SK-N-SH (cell line): ENCODE measurements at regions of chrX and their contacts with region 1.

Region 1: DNA sequence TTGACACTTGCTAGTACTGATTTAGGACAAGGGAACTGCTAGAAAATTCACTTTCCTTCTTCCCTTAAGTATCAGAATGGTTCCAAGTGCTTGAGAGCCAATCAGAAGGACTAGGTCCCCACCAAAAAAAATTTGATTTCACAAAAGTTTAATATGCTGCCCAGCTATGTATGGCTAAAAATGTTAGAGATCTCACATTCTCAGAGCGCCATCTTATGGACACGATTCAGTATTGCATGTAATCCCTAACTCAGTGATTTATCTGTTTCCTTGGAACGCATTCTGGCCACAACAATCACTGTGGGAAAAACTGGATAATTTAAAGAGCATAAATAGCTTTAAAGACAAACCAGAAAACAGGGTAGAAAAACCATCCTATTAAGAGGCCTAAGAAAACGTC is 255.1 kb upstream of the GPC4 start:
- DNase-seq: peak; percentile 48
- H3K4me3 ChIP-seq: no peak overlapping the region; a peak in 1 of 4 replicates
- H3K27ac ChIP-seq: no peak overlapping the region
- H3K4me1 ChIP-seq: peaks cover 0 to 4% of the 10 kb centered on the region in 2 experiments; a peak in 1 of 4 replicates
- H3K27me3 ChIP-seq: peaks cover 23% of the 10 kb centered on the region; the same call in 1 of the 2 replicates
- CTCF ChIP-seq: peak; percentile 88
- EP300 ChIP-seq: no peak
- RAD21 ChIP-seq: peak; percentile 88

Region 2: DNA sequence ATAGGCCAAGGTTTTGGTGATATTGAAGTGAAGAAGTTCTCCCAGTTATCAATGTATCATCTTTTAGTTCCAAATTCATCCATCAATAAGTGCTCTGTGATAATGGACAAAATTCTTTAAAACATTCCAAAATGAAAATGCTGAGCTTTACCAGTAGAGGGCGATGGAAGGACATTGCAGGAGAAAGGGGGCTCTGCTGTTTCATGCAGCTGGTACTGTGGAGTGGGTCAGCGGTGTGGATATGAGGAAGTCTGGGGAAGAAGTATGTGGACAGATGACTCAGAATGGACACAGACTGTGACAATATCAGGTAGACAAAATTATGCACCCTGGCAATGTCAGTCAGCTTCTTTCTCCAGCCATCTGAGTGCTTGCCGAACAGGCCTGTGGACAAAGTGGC is 665.3 kb before region 1 on chrX:
- CTCF ChIA-PET with region 1: interaction called, 10 read pairs
- POLR2A ChIA-PET with region 1: no interaction called
- DNase-seq: peak; percentile 39
- H3K4me3 ChIP-seq: no peak overlapping the region; a peak in 1 of 4 replicates
- H3K27ac ChIP-seq: no peak overlapping the region; a peak in 1 of 4 replicates
- H3K4me1 ChIP-seq: peaks cover 0 to 2% of the 10 kb centered on the region in 2 experiments; a peak in 1 of 4 replicates
- H3K27me3 ChIP-seq: no peaks in the 10 kb centered on the region; the same call in 1 of the 2 replicates
- CTCF ChIP-seq: peak; percentile 67
- EP300 ChIP-seq: no peak
- RAD21 ChIP-seq: peak; percentile 71

Region 3: DNA sequence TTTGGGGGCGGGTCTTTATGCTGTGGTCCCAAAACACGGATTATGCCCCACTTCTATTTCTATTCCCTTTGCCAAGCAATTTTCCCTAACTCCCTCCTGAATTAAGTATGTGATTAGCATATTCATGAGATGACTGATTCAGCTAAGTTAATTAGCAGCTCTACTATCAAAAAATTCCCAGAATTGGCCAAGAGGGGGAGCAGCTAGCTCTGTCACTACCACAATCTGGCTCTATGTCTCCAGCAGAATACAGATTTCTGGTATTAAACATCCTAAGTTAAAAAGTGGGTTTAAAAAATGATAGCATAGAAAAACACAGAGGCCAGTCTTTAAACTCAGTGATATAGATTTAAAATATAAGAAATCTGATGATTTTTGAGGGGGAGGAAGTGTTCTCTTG is 335.4 kb before region 1 on chrX:
- CTCF ChIA-PET with region 1: interaction called, 32 read pairs
- POLR2A ChIA-PET with region 1: no interaction called
- DNase-seq: peak; percentile 32
- H3K4me3 ChIP-seq: no peak overlapping the region
- H3K27ac ChIP-seq: no peak overlapping the region
- H3K4me1 ChIP-seq: no peaks in the 10 kb centered on the region
- H3K27me3 ChIP-seq: no peaks in the 10 kb centered on the region; the same call in 1 of the 2 replicates
- CTCF ChIP-seq: peak; percentile 69
- EP300 ChIP-seq: no peak
- RAD21 ChIP-seq: peak; percentile 65

Region 4: DNA sequence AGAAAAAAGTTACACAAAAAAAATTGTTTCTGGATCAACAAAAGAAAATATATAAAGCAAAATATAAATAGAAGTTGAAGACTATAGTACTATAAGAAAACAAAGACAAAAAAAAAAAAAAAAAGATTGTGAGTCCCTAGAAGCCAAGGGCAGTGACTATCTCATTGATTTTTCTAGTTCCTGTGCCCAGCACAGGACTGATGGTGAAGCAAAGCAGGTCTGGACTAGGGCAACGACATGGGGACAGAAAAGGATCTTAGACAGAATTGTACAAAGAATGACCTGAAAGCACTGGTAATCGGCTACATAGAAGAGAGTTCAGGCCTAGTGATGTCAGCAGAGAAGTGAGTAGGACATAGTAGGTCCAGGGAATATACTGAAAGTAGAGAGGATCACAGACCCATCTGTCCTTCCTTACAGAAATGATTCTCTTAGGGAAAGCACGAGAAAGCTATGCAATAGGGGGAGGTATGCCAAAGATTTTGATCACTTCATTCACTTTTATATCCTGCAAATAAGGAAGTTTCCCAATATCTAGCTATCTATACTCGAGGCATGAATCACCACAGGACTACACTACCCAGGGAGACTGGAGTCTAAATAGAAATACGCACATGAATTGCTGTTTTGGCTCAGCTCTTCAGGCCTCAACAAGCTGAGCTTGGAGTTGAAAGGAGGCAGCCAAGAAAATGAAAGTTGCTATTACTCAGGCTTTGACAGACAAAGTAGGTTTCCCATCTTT is 24.2 kb before region 1 on chrX:
- CTCF ChIA-PET with region 1: interaction called, 15 read pairs
- POLR2A ChIA-PET with region 1: no interaction called
- DNase-seq: no peak
- H3K4me3 ChIP-seq: no peak overlapping the region
- H3K27ac ChIP-seq: no peak overlapping the region
- H3K4me1 ChIP-seq: no peaks in the 10 kb centered on the region
- H3K27me3 ChIP-seq: peaks cover 7% of the 10 kb centered on the region; the same call in 1 of the 2 replicates
- CTCF ChIP-seq: no peak
- EP300 ChIP-seq: no peak
- RAD21 ChIP-seq: no peak

Region 5: GRCh38 chrX:133660281-133660680 is 10.1 kb before region 1 on chrX:
- CTCF ChIA-PET with region 1: interaction called, 10 read pairs
- POLR2A ChIA-PET with region 1: no interaction called
- DNase-seq: no peak
- H3K4me3 ChIP-seq: no peak overlapping the region
- H3K27ac ChIP-seq: no peak overlapping the region
- H3K4me1 ChIP-seq: no peaks in the 10 kb centered on the region; a peak in 1 of 4 replicates
- H3K27me3 ChIP-seq: 0 out of 2 replicates have a peak, but pooled peaks cover 6% of the 10 kb centered on the region
- CTCF ChIP-seq: no peak
- EP300 ChIP-seq: no peak
- RAD21 ChIP-seq: no peak

Region 6: DNA sequence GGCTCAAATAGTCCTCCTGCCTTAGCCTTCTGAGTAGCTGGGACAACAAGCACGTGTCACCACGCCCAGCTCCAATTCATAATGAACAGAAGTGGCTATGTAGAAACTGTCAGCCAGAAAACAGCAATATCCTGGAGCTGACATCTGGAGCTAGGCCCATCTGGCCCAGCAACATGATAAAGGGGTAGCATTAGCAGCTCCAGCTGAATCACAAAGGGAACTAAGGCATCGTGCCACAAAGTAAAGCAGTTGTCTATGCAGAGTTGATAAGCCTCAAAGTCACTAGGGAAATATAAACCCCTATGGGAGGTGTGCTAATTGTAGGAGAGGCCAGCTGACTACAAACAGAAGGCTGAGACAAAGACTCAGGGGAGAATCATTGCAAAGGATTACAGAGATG is 15.4 kb after region 1 on chrX:
- CTCF ChIA-PET with region 1: interaction called, 22 read pairs
- POLR2A ChIA-PET with region 1: no interaction called
- DNase-seq: peak; percentile 33
- H3K4me3 ChIP-seq: no peak overlapping the region
- H3K27ac ChIP-seq: no peak overlapping the region
- H3K4me1 ChIP-seq: no peaks in the 10 kb centered on the region; a peak in 1 of 4 replicates
- H3K27me3 ChIP-seq: peaks cover 5% of the 10 kb centered on the region; the same call in 1 of the 2 replicates
- CTCF ChIP-seq: no peak
- EP300 ChIP-seq: no peak
- RAD21 ChIP-seq: no peak